ENCODE measurements at regions of chr12 and their contacts with region 1.

Region 1: DNA sequence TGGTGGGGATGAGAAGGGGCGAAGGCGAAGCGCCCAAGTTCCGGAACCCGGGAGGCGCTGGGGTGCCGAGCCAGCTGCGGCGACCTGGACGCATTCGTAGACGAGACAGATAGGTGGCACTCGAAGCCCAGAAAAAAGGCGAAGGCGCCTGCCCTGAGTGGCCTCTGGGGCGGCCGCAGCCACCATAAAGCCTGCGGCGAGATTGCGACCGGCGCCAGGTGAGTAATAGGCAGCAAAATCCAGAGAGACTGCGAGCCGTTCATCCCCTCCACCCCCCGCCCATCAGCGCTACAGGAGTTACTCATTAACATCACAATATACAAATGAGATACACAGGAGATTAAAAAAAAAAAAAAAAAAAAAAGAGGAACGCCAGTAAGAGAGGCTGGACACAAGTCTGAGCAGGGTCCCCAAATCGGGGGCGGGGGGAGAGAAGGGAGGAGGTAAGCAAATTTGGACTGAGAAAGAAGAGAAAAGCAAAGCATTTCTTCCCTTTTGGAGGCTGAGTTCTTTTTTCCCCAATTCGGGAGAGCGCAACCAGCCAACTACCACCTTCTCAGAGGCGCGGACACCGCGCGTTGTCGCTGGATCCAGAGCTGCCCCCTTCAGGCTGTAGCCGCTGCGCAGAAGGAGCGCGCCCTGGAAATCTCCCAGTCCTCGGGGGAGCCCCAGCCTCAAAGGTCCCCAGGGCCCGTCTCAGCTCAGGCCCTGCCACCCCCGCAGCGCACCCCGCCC is 15.7 kb downstream of the TBX3 start:
- DNase-seq: peak; percentile 76
- ATAC-seq: peak; percentile 94

Region 2: GRCh38 chr12:115103884-115104883 is 435.9 kb after region 1 on chr12:
- intact Hi-C with region 1: loop called (anchors 10 kb)
- DNase-seq: no peak
- ATAC-seq: peak; percentile 57

Region 3: DNA sequence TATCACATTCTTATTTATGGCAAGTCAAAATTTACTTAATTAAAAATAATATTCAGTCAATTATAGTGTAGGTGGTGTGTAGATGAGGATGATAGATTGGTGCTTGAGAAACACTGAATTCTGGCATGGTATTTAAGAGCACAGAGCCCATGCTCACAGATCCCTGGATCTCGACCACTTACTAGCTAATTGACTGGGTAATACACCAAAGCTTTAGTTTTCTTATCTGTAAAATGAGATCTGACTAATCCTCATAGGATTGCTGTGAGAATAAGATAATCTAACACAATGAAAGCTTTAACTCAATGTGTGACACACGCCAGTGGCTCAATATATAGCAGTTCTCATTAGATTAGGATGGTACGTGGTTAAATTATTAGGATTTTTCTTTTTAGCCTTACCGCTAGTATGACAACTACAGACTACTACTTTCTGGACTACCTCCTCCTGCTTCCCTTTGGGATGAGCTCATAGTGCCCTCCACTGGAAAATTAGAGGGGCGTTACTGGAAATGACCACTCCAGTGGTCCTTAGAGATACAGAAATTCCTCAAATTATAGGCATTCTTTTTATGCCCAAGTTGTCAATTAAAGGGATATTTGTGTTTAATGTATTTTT is 498.5 kb after region 1 on chr12:
- intact Hi-C with region 1: loop called (anchors 2 kb)
- DNase-seq: no peak
- ATAC-seq: no peak

Region 4: GRCh38 chr12:115632308-115632707 is 964.0 kb after region 1 on chr12:
- intact Hi-C with region 1: loop called (anchors 2 kb)
- DNase-seq: no peak
- ATAC-seq: no peak